ENCODE measurements at regions of chr11 and their contacts with region 1.

Region 1: DNA sequence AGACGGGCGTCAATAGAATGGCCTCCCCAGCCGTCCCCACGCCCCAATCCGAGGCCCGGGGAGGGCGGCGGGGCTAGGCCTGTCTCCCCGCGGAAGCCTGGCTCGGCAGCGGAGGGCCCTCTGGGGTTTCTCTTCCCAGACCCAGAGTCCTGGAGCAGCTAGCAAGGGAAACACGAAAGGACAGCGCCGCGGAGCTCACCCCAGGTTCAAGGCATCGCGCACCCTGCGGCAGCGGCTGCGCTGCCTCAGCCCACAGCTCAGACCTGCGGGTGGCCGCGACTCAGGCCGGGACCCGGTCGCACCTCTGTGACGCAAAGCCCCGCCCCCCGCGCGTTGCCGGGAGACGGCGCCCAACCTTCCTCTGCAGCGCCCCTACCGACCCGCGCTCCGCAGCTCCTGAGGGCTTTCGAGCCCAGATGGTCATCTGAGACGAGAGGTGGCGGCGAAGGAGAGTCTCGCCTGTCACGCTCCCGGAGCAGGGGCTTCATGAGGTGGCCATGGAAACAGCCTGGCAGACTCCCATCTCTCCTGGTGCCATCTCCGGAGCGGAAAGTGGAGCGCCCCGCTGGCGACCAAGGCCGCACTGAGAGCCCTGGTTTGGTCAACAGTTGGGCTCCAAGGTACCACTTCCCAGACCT is at the start of gene RNF141:
- DNase-seq: peak; percentile 98
- ATAC-seq: peak; percentile 98
- H3K4me3 Mint-ChIP-seq: peak within 1 kb of the TSS; percentile 88
- H3K27ac Mint-ChIP-seq: peak within 1 kb of the TSS; percentile 58
- H3K4me1 Mint-ChIP-seq: peaks cover 17% of the 10 kb centered on the region
- H3K27me3 Mint-ChIP-seq: no peaks in the 10 kb centered on the region
- total RNA-seq, gene RNF141: 12.5 to 17.8 TPM

Region 2: DNA sequence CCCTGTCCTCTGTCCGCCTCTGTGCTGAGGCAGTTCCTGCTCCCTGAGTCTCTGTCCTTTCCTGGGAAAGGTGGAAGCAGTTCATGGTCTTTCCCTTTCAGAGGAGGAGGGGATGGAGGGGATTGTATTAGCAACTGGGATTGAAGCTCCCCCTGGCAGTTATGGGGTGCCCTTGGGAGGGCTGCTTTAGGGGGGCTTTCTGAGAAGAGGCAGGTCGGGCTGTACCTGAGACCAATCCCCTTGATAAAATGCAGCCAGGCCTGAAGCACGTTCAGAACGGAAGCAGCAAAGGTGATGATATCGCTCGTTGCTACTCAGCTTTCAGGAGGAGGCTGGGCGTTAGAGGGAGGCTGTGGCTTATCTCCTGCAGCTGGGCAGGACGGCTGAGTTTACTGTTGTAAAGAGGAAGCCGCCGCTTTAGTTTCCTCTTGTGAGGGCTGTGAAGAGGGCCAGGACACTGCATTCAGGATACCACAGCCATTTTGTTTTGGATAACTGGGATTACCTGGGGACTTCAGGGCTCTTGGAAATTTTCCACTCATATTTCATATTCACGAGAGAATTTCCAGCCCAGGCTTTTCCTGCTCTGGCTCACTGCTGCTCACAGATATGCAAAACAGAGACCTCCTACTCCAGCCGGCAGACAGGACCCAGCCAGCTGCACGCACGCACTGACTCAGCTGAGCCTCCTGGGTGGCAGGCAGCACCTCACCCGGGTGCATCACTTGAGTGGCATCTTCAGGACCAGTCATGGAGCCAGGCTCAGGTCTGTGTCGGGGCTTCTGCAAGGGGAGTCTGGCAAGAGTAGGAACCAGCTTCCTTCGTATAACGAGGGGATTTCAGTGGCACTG is 85.2 kb before region 1 on chr11:
- CTCF ChIA-PET with region 1: interaction called, 17 read pairs
- POLR2A ChIA-PET with region 1: interaction called, 6 read pairs
- intact Hi-C with region 1: loop called (anchors 1 to 2 kb)
- DNase-seq: peak; percentile 91
- ATAC-seq: peak; percentile 80
- H3K4me3 Mint-ChIP-seq: peak overlapping the region; percentile 91
- H3K27ac Mint-ChIP-seq: peak overlapping the region; percentile 98
- H3K4me1 Mint-ChIP-seq: peaks cover 88% of the 10 kb centered on the region
- H3K27me3 Mint-ChIP-seq: no peaks in the 10 kb centered on the region

Region 3: DNA sequence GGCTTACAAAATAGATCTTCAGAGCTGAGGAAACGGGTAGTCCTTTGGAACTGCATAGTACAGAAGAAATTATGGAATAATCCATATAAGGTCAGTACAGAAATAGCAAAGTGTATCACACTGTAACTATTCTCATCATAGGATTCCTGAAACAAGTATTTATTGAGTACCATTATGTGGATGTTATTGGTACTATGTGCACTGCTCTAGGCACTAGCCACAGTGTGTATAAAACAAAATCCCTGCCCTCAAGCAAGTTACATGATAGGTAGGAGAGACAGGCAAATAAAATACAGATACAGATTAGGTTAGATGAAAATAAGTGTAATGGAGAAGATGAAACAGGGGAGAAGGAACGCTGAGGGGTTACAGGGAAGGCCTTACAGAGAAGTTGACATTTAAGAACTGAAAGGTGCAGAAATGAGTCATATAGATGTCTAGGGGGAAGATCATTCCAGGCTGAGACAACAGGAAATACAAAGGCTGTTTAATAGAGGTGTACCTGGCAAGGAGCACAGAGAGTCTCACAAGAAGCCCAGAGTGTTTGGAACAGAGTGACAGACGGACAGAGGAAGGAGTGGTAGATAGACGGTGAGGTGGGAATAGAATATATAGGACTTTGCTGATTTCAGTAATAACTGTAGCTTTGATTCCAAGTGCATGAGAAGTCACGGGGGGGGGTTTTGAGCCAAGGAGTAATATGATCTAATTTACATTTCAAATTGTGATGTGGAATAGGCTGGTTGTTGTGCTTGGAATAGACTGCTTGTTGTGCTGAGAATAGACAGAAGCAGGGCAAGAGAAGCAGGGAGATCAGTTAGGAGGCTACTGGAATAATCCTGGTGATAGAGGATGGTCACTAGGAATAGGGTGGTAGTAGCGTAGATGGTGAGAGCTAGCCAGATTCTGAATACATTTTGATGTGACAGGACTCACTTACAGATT is 13.8 kb before region 1 on chr11:
- CTCF ChIA-PET with region 1: interaction called, 29 read pairs
- POLR2A ChIA-PET with region 1: no interaction called
- intact Hi-C with region 1: loop called in 1 of 2 experiments (anchors 1 kb)
- DNase-seq: no peak
- ATAC-seq: peak; percentile 96
- H3K4me3 Mint-ChIP-seq: peak overlapping the region; percentile 9
- H3K27ac Mint-ChIP-seq: peak overlapping the region; percentile 83
- H3K4me1 Mint-ChIP-seq: peaks cover 22% of the 10 kb centered on the region
- H3K27me3 Mint-ChIP-seq: no peaks in the 10 kb centered on the region

Region 4: GRCh38 chr11:10727146-10727851 is 186.3 kb after region 1 on chr11:
- CTCF ChIA-PET with region 1: interaction called, 3 read pairs
- POLR2A ChIA-PET with region 1: no interaction called
- intact Hi-C with region 1: loop called (anchors 2 to 10 kb)
- DNase-seq: no peak
- ATAC-seq: no peak
- H3K4me3 Mint-ChIP-seq: no peak overlapping the region
- H3K27ac Mint-ChIP-seq: no peak overlapping the region
- H3K4me1 Mint-ChIP-seq: peaks cover 24% of the 10 kb centered on the region
- H3K27me3 Mint-ChIP-seq: peaks cover 9% of the 10 kb centered on the region

Region 5: GRCh38 chr11:10750838-10751580 is 210.0 kb after region 1 on chr11 and contains the start of gene CTR9:
- CTCF ChIA-PET with region 1: no interaction called
- POLR2A ChIA-PET with region 1: no interaction called
- intact Hi-C with region 1: loop called in 1 of 2 experiments (anchors 1 kb)
- DNase-seq: peak; percentile 97
- ATAC-seq: peak; percentile 92
- H3K4me3 Mint-ChIP-seq: peak within 1 kb of the TSS; percentile 96
- H3K27ac Mint-ChIP-seq: peak within 1 kb of the TSS; percentile 92
- H3K4me1 Mint-ChIP-seq: peaks cover 16% of the 10 kb centered on the region
- H3K27me3 Mint-ChIP-seq: no peaks in the 10 kb centered on the region
- total RNA-seq, gene CTR9: 39.7 to 43.9 TPM

Region 6: DNA sequence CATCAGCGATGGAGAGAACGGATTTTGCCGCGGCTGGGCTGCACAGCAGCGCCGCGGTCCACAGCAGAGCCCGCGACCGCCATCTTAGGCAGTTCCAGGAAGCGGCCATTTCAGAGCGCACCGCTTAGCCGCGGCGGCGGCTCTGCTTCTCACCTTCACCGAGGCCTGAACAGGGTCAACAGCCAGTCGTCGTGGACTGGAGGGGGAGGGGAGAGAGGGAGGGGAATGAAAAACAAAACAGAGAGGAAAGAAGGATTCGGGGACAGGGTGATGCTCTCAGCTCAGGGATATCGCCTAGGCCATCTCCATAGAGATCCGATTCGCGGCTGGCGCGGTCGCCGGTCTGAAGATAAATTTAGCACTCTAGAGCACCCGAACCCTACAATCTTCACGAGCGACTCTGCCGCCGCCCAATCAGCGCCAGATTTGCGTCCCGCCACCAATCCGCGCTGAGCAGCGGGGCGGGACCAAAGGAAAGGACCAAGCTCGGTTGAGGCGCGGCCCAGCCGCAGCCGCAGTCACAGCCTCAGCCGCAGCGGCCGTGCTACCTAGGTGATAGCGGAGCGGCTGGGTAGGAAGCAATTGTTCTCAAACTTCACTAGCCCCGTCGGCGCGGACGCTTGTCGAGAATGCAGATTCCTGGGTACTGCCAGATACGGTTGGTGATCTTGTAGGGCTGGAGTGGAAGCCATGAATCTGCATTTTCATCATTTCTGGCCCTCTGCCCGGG is 316.8 kb after region 1 on chr11 and contains the start of gene ZBED5:
- CTCF ChIA-PET with region 1: no interaction called
- POLR2A ChIA-PET with region 1: no interaction called
- intact Hi-C with region 1: loop called in 1 of 2 experiments (anchors 10 kb)
- DNase-seq: peak; percentile 98
- ATAC-seq: peak; percentile 93
- H3K4me3 Mint-ChIP-seq: peak within 1 kb of the TSS; percentile 100
- H3K27ac Mint-ChIP-seq: peak within 1 kb of the TSS; percentile 100
- H3K4me1 Mint-ChIP-seq: peaks cover 40% of the 10 kb centered on the region
- H3K27me3 Mint-ChIP-seq: no peaks in the 10 kb centered on the region
- total RNA-seq, gene ZBED5: 34.1 to 44.3 TPM